B cell (primary cell): ENCODE measurements at regions of chr16 and their contacts with region 1.

Region 1: GRCh38 chr16:58471321-58471975 is 28.5 kb upstream of the NDRG4 start:
- DNase-seq: no peak
- ATAC-seq: no peak
- H3K4me3 ChIP-seq: no peak overlapping the region
- H3K4me3 Mint-ChIP-seq: no peak overlapping the region
- H3K27ac ChIP-seq: no peak overlapping the region
- H3K27ac Mint-ChIP-seq: no peak overlapping the region
- H3K4me1 ChIP-seq: peaks cover 0 to 4% of the 10 kb centered on the region in 2 donors
- H3K4me1 Mint-ChIP-seq: peaks cover 6% of the 10 kb centered on the region
- H3K27me3 ChIP-seq: peaks cover 0 to 15% (median 2%) of the 10 kb centered on the region in 4 experiments
- H3K27me3 Mint-ChIP-seq: peaks cover 46% of the 10 kb centered on the region
- CTCF ChIP-seq: no peak

Region 2: DNA sequence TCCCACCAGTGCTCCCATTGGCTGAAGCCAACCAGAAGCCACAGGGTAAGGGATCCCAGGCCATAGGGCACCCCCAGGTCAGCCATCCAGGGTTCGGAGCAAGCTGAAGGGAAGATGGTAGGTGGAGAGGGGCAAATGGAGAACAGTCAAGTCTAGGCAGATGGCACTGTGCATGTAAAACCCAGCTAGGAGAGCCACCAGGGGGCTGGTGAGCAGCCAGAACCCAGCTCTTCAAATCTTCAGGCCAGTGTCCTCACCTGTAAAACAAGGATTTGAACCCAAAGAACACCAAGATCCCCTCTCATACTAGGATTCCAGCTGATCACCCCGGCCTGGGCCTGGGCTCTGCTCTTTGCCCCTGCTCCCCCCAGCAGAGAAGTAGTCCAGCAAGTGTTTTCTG is 35.7 kb before region 1 on chr16:
- CTCF ChIA-PET with region 1: no interaction called
- POLR2A ChIA-PET with region 1: interaction called, 10 read pairs
- intact Hi-C with region 1: no loop called
- DNase-seq: no peak
- ATAC-seq: no peak
- H3K4me3 ChIP-seq: no peak overlapping the region
- H3K4me3 Mint-ChIP-seq: no peak overlapping the region
- H3K27ac ChIP-seq: no peak overlapping the region
- H3K27ac Mint-ChIP-seq: no peak overlapping the region
- H3K4me1 ChIP-seq: peaks cover 6 to 8% of the 10 kb centered on the region in 2 donors
- H3K4me1 Mint-ChIP-seq: peaks cover 7% of the 10 kb centered on the region
- H3K27me3 ChIP-seq: no peaks in the 10 kb centered on the region
- H3K27me3 Mint-ChIP-seq: no peaks in the 10 kb centered on the region
- CTCF ChIP-seq: no peak